ENCODE measurements at regions of chr3 and their contacts with region 1.

Region 1: GRCh38 chr3:152720941-152721718 is 113.8 kb upstream of the P2RY1 start:
- DNase-seq: no peak
- H3K4me3 ChIP-seq: no peak overlapping the region
- H3K27ac ChIP-seq: no peak overlapping the region
- H3K4me1 ChIP-seq: peaks cover 8% of the 10 kb centered on the region; the same call in 1 of the 2 replicates
- H3K27me3 ChIP-seq: no peaks in the 10 kb centered on the region
- CTCF ChIP-seq: no peak

Region 2: DNA sequence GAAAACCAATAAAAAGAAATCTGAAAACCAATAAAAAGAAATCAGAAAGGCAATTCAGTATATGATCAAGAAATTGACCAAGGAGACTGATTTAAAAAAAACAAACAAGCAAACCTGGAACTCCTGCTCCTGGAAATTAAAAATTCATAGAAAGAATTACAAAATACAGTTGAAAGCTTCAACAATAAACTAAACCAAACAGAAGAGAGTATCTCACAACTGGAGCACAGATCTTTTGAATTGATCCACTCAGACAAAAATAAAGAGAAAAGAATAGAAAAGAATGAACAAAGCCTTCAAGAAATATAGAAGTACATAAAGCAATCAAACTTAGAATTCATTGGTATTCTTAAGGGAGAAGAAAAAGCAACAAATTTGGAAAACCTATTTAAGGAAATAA is 181.0 kb before region 1 on chr3:
- CTCF ChIA-PET with region 1: interaction called, 15 read pairs
- POLR2A ChIA-PET with region 1: no interaction called
- intact Hi-C with region 1: no loop called
- DNase-seq: no peak
- H3K4me3 ChIP-seq: no peak overlapping the region
- H3K27ac ChIP-seq: no peak overlapping the region
- H3K4me1 ChIP-seq: no peaks in the 10 kb centered on the region
- H3K27me3 ChIP-seq: no peaks in the 10 kb centered on the region
- CTCF ChIP-seq: no peak

Region 3: GRCh38 chr3:152811974-152812760 is 91.0 kb after region 1 on chr3:
- CTCF ChIA-PET with region 1: no interaction called
- POLR2A ChIA-PET with region 1: no interaction called
- intact Hi-C with region 1: no loop called
- DNase-seq: no peak
- H3K4me3 ChIP-seq: no peak overlapping the region
- H3K27ac ChIP-seq: no peak overlapping the region
- H3K4me1 ChIP-seq: no peaks in the 10 kb centered on the region
- H3K27me3 ChIP-seq: no peaks in the 10 kb centered on the region
- CTCF ChIP-seq: no peak

Measured in PC-9 (cell line).